SK-MEL-5 (cell line): ENCODE measurements at regions of chr4 and their contacts with region 1.

Region 1: GRCh38 chr4:21544415-21544814 is 404.2 kb downstream of the KCNIP4 start:
- DNase-seq: no peak

Region 2: DNA sequence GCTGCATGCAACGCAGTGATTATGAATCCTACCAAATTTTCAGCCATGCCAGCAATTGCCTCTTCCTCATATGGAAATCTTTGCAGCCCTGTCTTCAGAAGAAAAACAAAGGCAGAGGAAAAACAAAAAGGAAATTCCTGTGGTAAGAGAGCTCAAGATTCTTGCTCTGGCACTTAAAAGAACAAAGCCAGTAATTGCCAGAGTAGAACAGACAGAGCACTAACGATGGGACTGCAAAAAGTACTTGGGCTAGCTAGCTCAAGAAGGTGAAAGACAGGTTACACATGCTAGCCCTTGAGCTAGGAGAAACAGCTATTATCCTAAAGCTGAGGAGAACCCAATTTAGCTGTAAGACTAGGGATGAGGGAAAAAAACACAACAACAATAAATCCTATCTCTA is 178.1 kb before region 1 on chr4:
- in situ Hi-C with region 1: no loop called
- DNase-seq: no peak

Region 3: GRCh38 chr4:21765810-21766407 is 221.5 kb after region 1 on chr4:
- in situ Hi-C with region 1: loop called (anchors 25 kb)
- DNase-seq: peak; percentile 70